ENCODE measurements at regions of chr17 and their contacts with region 1.

Region 1: DNA sequence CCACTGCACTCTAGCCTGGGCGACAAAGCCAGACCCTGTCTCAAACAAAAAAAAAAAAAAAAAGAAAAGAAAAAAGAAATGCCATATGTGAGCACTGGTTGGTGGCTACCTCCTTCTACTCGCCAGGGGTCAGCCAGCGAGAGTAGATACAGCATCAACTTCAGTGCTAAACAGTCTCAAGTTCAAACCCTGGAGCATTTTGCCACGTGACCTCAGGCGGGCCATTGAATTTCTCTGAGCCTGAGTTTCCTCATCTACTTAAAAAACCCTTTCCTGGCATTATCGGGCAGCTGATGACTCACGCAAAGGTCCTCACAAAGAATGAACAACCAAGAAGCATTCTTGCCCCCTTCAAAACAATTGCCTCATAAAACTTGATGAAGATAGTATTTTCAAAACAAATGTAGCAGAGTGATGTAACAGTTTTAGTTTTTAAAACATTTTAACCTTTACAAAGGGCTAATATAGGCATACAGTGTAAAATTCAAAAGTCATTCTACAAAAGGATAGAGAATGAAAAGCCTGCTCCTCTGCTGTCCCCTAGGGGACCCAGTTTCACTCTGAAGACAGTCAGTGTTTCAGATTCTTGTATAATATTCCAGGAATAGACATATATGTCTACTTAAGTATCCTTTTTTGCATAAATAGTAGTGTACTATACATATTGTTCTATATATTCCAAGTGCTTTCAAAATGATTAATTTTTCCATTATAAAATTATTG is 28.4 kb downstream of the DNAH2 start:
- DNase-seq: peak; percentile 70 to 75
- ATAC-seq: peak; percentile 55 to 65; a peak in 5 of 6 replicates
- H3K4me3 ChIP-seq: no peak overlapping the region
- H3K27ac ChIP-seq: peak overlapping the region in 1 of 2 experiments; percentile 24; a peak in 3 of 6 replicates
- H3K4me1 ChIP-seq: peaks cover 12% of the 10 kb centered on the region
- CTCF ChIP-seq: peak; percentile 13; the same call in 1 of the 3 replicates
- EP300 ChIP-seq: no peak
- POLR2A ChIP-seq: no peak
- RAD21 ChIP-seq: no peak

Region 2: DNA sequence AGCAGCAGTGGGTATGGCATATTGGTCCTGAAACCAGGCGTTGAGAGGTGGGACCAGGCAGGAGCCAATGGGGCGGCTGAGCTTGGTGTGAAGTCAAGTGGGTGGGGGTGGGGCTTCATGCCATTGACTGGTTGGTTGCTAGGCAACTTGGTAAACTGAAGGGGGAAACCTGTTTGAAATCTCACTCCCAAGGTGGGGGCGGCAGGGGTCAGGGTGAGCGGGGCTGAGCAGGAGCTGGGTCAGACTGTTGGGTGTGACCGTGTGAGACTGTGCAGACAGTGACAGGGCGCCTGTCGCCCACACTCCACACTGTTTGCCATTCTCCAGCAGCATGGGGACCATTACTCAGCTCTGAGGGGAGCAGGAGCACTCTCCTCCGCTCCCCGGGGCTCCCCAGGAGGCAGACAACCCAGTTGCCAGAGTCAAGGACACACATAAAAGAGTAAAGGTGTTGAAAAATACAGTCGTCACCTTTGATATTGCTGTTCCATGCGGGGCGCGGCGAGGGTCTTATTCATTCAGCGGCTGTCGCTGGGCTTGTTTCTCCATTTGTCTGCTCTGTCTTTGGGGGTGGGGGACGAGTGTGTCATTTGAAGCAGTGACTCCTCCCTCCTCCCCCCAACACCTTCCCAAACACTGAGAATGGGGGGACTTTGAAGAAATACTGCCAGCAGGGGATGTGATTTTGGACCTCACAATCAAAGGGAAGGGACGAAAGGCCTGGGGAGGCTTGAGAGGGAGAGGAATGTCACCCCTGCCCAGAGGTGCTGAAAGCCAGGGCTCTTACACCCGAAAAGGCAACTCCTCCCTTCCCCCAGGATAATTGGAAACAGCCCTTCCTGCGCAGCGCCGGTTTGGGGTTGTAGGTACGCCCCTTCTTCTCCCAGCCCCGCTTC is 42.1 kb before region 1 on chr17:
- CTCF ChIA-PET with region 1: interaction called, 11 read pairs
- POLR2A ChIA-PET with region 1: no interaction called
- DNase-seq: peak; percentile 34 to 77
- ATAC-seq: peak in 1 of 2 experiments; percentile 55; a peak in 3 of 6 replicates
- H3K4me3 ChIP-seq: no peak overlapping the region; the same call in 2 of the 3 replicates
- H3K27ac ChIP-seq: no peak overlapping the region
- H3K4me1 ChIP-seq: peaks cover 13% of the 10 kb centered on the region; the same call in 2 of the 3 replicates
- CTCF ChIP-seq: no peak
- EP300 ChIP-seq: no peak
- POLR2A ChIP-seq: no peak
- RAD21 ChIP-seq: no peak

Region 3: GRCh38 chr17:7782237-7782636 is 36.3 kb after region 1 on chr17:
- CTCF ChIA-PET with region 1: interaction called, 114 read pairs
- POLR2A ChIA-PET with region 1: no interaction called
- DNase-seq: peak in 1 of 2 experiments; percentile 20
- ATAC-seq: no peak
- H3K4me3 ChIP-seq: no peak overlapping the region
- H3K27ac ChIP-seq: no peak overlapping the region
- H3K4me1 ChIP-seq: no peaks in the 10 kb centered on the region
- CTCF ChIP-seq: peak; percentile 17; the same call in 1 of the 3 replicates
- EP300 ChIP-seq: no peak
- POLR2A ChIP-seq: no peak
- RAD21 ChIP-seq: peak; percentile 20 to 45; a peak in 2 of 5 replicates

Region 4: GRCh38 chr17:7818746-7819645 is 73.1 kb after region 1 on chr17:
- CTCF ChIA-PET with region 1: interaction called, 65 read pairs
- POLR2A ChIA-PET with region 1: no interaction called
- DNase-seq: no peak
- ATAC-seq: no peak
- H3K4me3 ChIP-seq: no peak overlapping the region
- H3K27ac ChIP-seq: no peak overlapping the region
- H3K4me1 ChIP-seq: no peaks in the 10 kb centered on the region
- CTCF ChIP-seq: no peak
- EP300 ChIP-seq: no peak
- POLR2A ChIP-seq: no peak
- RAD21 ChIP-seq: no peak

Region 5: DNA sequence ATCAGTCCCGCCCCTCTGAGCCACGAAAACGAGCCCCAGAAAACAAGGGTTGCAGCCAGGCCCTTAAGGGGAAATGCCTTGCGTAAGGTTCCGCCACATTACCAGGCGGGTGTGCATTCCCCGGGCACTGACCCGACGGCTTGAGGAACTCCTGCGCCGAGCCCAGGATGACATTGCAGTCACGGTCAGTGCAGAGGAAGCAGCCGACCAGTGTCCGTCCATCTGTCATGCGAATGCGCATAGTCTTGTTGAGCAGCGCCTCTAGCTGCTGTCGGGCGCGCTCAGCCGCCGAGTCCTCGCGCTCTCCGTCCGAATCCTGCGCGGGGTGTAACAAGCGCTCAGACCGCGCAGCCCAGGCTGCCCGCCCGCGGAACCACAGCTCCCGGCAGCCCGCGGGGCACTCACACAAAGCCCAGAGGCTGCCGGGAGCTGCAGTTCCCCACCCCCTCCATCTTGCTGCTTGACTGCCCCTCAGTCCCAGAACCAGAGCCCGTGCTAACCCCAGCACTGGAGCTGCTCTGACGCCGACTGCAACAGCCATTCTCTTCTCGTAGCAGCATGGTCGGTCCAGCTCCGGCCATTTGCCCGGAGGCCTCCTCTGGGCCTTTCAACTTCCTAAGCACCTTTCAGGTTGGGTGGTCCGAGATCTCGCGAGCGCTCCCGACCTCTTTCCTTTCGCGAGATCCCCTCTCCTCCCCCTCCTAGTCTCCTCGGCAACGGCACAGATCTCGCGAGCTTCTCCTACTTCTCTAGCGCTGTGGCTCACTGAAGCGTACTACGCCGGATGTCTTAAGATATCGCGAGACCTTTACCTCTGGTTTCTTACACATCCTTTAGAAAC is 111.2 kb after region 1 on chr17 and contains the start of gene NAA38:
- CTCF ChIA-PET with region 1: interaction called, 24 read pairs
- POLR2A ChIA-PET with region 1: interaction called, 5 read pairs
- DNase-seq: peak; percentile 95 to 100
- ATAC-seq: peak; percentile 74 to 88
- H3K4me3 ChIP-seq: peak within 1 kb of the TSS; percentile 69
- H3K27ac ChIP-seq: peak within 1 kb of the TSS; percentile 91 to 98
- H3K4me1 ChIP-seq: peaks cover 23% of the 10 kb centered on the region
- CTCF ChIP-seq: peak; percentile 40
- EP300 ChIP-seq: no peak
- POLR2A ChIP-seq: peak; percentile 55
- RAD21 ChIP-seq: peak; percentile 32 to 56; a peak in 3 of 5 replicates
- polyA plus RNA-seq, gene NAA38: 98.9 and 102 TPM in 2 replicates

Region 6: GRCh38 chr17:7982666-7983065 is 236.8 kb after region 1 on chr17:
- CTCF ChIA-PET with region 1: interaction called, 24 read pairs
- POLR2A ChIA-PET with region 1: no interaction called
- DNase-seq: no peak
- ATAC-seq: peak in 1 of 2 experiments; percentile 60; a peak in 2 of 6 replicates
- H3K4me3 ChIP-seq: no peak overlapping the region
- H3K27ac ChIP-seq: no peak overlapping the region
- H3K4me1 ChIP-seq: no peaks in the 10 kb centered on the region
- CTCF ChIP-seq: no peak; the same call in 2 of the 3 replicates
- EP300 ChIP-seq: no peak
- POLR2A ChIP-seq: no peak
- RAD21 ChIP-seq: peak in 1 of 2 experiments; percentile 33; a peak in 2 of 5 replicates